Activated CD8-positive, alpha-beta T cell treated with anti-CD3 and anti-CD28 coated beads, Interleukin-2, amount 10 ng/mL, durations not matched to agents 7 days and 5 days (primary cell): ENCODE measurements at regions of chr16 and their contacts with region 1.

Region 1: DNA sequence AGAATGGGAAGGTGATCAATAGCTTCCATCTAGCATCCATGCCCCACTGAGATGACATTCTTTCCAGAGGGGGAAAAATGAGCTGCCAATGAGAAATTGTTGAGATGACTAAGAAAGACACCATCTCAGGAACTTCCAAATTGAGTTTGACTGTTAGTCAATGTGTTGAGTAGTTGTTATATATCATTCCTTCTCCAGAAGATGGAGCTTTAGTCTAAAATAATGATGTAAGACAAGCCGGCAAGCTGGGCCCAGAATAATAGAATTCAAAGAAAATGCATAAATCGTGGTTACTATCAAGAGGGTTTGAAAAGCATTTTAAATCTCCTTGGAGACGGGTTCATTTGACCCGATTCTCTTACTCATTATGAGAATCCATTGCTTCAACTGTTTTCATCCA is 71.0 kb upstream of the ATF7IP2 start:
- DNase-seq: no peak
- ATAC-seq: no peak
- H3K4me3 Mint-ChIP-seq: no peak overlapping the region
- H3K27ac Mint-ChIP-seq: no peak overlapping the region
- H3K4me1 Mint-ChIP-seq: peaks cover 11% of the 10 kb centered on the region
- H3K27me3 Mint-ChIP-seq: no peaks in the 10 kb centered on the region

Region 2: DNA sequence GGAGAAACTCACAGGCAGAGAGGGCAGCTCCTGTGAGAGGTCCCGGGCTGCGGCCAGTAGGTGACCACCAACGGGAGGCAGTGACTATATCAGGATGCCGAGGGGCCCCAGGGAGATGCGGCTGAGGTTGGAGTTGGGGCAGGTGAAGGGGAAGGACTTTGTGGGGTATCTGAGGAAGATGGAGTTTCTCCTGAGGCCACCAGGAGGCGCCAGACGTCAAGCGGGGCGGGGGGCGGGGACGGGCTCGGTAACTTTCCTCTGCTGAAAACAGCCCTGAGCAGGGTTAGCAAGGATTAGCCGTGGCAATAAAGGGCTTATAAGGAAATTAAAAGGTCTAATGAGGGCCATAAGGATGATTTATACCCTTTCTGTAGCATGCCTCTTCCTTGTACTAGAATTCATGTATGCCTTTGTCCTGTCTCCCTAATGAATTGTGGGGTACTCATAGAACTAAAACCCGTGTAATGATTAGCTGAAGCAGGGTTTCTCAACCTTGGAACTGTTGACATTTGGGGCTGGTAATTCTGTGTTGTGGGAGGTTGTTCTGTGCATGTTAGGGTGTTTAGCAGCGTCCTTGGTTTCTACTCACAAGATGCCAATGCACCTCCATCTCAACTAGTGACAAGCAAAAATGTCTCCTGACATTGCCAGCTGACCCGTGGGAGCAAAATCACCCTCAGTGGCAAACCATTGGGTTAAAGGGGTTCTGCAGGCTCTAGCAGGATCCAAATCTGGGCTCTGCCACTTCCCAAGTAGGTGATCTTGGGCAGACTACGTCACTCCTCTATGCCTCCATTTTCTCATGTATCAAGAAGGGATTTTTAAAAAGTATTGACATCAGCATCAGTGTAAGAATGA is 57.8 kb before region 1 on chr16:
- CTCF ChIA-PET with region 1: interaction called, 10 read pairs
- POLR2A ChIA-PET with region 1: no interaction called
- DNase-seq: peak; percentile 59
- ATAC-seq: peak; percentile 63
- H3K4me3 Mint-ChIP-seq: no peak overlapping the region
- H3K27ac Mint-ChIP-seq: no peak overlapping the region
- H3K4me1 Mint-ChIP-seq: peaks cover 8% of the 10 kb centered on the region
- H3K27me3 Mint-ChIP-seq: peaks cover 7% of the 10 kb centered on the region

Region 3: DNA sequence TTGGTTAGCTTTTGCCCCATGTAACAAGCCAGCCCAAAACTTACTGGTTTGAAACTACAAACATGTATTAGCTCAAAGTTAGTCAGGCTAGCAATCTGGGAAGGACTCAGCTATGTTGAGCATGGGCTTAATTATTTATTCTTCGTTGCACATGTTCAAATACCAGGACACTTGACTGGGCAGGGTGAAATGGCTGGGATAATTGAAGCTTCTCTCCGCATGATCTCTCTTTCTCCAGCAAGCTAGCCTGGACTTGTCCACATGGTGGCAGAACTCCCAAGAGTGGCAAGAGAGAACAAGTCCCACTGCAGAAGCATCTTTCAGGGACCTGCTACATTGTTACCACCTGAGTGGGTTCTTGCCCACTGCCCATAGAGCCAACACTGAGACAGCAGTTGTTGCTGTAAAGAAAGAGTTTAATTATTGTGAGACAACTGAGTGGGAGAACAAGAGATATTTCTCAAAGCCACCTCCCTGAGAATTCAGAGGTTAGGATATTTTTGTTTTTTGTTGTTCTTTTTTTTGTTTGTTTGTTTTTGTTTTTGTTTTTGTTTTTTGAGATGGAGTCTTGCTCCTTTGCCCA is 54.2 kb after region 1 on chr16:
- CTCF ChIA-PET with region 1: interaction called, 10 read pairs
- POLR2A ChIA-PET with region 1: no interaction called
- DNase-seq: no peak
- ATAC-seq: no peak
- H3K4me3 Mint-ChIP-seq: no peak overlapping the region
- H3K27ac Mint-ChIP-seq: no peak overlapping the region
- H3K4me1 Mint-ChIP-seq: no peaks in the 10 kb centered on the region
- H3K27me3 Mint-ChIP-seq: no peaks in the 10 kb centered on the region

Region 4: GRCh38 chr16:10509534-10510025 is 194.8 kb after region 1 on chr16:
- CTCF ChIA-PET with region 1: interaction called, 33 read pairs
- POLR2A ChIA-PET with region 1: no interaction called
- DNase-seq: peak; percentile 78
- ATAC-seq: peak; percentile 92
- H3K4me3 Mint-ChIP-seq: no peak overlapping the region
- H3K27ac Mint-ChIP-seq: no peak overlapping the region
- H3K4me1 Mint-ChIP-seq: no peaks in the 10 kb centered on the region
- H3K27me3 Mint-ChIP-seq: peaks cover 8% of the 10 kb centered on the region